Right lobe of liver (tissue), 6 donors: ENCODE measurements at regions of chr5 and their contacts with region 1.

Region 1: DNA sequence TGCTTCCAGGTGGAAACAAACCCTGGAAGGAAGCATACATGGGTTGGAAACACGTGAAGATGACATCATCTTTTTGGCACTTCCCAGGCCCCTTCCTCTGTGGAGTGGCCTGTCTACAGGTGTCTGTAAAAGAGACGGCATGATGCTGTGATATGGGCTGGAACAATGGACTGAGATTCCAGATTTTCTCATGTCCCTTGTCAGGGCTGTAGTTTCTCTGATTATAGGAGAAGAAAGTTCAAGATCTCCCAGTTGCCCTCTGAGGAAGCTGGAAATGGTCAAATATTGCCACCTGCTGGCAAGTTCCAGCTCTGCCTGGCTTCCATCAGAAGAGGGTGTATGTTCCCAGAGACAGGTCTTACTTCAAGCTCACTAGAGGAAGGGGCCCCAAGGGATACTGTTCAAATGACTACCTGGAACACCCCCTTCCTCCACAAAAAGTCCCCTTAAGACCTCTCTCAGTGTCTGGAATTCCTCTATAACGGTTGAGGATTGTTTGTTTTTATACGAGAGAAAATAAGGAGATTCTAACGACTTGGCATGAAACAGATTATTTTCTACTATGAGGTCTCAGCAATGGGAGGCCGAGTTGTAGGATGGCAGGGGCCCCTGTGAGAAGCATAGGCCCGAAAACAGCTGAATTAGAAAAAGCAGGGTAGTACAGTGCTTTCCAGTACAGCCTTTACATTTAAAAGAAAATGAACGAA is 7.3 kb upstream of the ANXA6 start:
- DNase-seq: peak in 2 of 3 donors; percentile 57 to 80
- ATAC-seq: peak; percentile 93 to 98 (median 98)
- H3K4me3 ChIP-seq: no peak overlapping the region
- H3K27ac ChIP-seq: no peak overlapping the region
- H3K4me1 ChIP-seq: peaks cover 0 to 5% (median 0%) of the 10 kb centered on the region in 4 donors
- H3K27me3 ChIP-seq: no peaks in the 10 kb centered on the region
- CTCF ChIP-seq: peak; percentile 92 to 96 (median 93)
- POLR2A ChIP-seq: no peak

Region 2: DNA sequence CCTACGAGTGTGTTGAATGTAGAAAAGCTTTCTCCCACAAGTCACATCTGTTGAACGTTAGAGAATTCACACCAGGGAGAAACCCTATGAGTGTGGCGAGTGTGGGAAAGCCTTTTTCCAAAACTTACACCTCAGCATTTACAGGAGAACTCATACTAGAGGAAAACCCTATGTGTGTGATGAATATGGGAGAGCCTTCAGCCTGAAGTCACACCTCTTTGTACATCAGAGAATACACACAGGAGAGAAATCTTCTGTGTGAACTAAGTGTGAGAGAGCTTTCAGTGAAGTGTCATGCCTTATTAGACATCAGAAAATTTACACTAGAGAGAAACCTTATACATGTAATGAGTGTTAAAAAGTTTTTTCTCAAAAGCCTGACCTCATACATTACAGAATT is 186.2 kb before region 1 on chr5:
- intact Hi-C with region 1: no loop called
- DNase-seq: no peak
- ATAC-seq: no peak
- H3K4me3 ChIP-seq: no peak overlapping the region
- H3K27ac ChIP-seq: no peak overlapping the region
- H3K4me1 ChIP-seq: no peaks in the 10 kb centered on the region
- H3K27me3 ChIP-seq: no peaks in the 10 kb centered on the region
- CTCF ChIP-seq: no peak
- POLR2A ChIP-seq: no peak

Region 3: GRCh38 chr5:151051066-151051930 is 113.5 kb before region 1 on chr5:
- intact Hi-C with region 1: loop called in 1 of 2 experiments (anchors 5 kb)
- DNase-seq: peak; percentile 73 to 80 (median 78)
- ATAC-seq: peak; percentile 83 to 88 (median 84)
- H3K4me3 ChIP-seq: no peak overlapping the region
- H3K27ac ChIP-seq: no peak overlapping the region
- H3K4me1 ChIP-seq: no peaks in the 10 kb centered on the region
- H3K27me3 ChIP-seq: no peaks in the 10 kb centered on the region
- CTCF ChIP-seq: peak; percentile 81 to 87 (median 84)
- POLR2A ChIP-seq: no peak

Region 4: GRCh38 chr5:151115274-151115905 is 49.4 kb before region 1 on chr5:
- intact Hi-C with region 1: loop called (anchors 5 to 10 kb)
- DNase-seq: peak; percentile 76 to 84 (median 81)
- ATAC-seq: peak; percentile 90 to 96 (median 93)
- H3K4me3 ChIP-seq: no peak overlapping the region
- H3K27ac ChIP-seq: no peak overlapping the region
- H3K4me1 ChIP-seq: peaks cover 0 to 3% (median 0%) of the 10 kb centered on the region in 4 donors
- H3K27me3 ChIP-seq: no peaks in the 10 kb centered on the region
- CTCF ChIP-seq: peak; percentile 86 to 94 (median 94)
- POLR2A ChIP-seq: no peak

Region 5: DNA sequence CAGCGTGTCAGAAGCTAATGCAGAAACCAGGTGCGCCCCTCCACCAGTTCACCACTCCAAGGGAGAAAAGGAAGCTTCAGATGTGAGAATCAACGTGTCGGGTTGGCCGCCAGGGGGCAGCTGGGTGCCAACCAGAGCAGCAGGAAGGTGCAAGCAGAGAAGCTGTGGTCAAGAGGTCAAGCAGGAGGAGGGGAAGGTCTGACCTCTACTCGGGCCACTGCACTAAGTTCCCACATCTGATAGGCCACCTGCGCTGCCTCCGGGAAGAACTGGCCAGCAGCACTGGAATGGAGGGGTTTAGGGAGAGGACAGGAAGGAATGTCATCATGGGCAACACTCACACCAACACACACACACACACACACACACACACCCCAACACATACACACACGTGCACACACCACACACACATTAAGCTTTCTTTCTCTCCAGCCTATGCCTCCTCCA is 38.6 kb before region 1 on chr5:
- intact Hi-C with region 1: loop called (anchors 5 kb)
- DNase-seq: peak; percentile 81 to 85 (median 83)
- ATAC-seq: peak; percentile 86 to 93 (median 88)
- H3K4me3 ChIP-seq: no peak overlapping the region
- H3K27ac ChIP-seq: no peak overlapping the region
- H3K4me1 ChIP-seq: peaks cover 0 to 8% (median 0%) of the 10 kb centered on the region in 4 donors
- H3K27me3 ChIP-seq: no peaks in the 10 kb centered on the region
- CTCF ChIP-seq: peak; percentile 81 to 89 (median 84)
- POLR2A ChIP-seq: no peak

Region 6: DNA sequence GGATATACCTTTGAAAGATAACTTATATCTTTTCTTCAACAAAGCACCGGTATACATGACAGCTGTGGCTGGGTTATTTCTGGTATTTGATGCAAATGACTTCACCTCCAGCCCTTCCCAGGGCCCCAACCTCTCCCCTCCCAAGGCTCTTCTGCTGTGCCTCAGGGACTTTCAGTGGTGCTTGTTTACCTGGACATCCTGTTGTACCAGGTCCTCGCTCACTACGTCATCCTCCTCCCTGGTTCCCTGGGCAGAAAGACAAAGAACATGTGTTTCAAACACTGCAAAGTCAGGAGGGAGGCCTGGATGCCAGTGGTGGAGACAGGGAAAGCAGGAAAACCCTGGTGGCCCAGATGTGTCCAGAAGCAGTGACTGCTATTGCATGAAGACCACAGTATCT is 30.6 kb before region 1 on chr5:
- intact Hi-C with region 1: loop called in 1 of 2 experiments (anchors 5 kb)
- DNase-seq: no peak
- ATAC-seq: no peak
- H3K4me3 ChIP-seq: no peak overlapping the region
- H3K27ac ChIP-seq: no peak overlapping the region
- H3K4me1 ChIP-seq: no peaks in the 10 kb centered on the region
- H3K27me3 ChIP-seq: no peaks in the 10 kb centered on the region
- CTCF ChIP-seq: no peak
- POLR2A ChIP-seq: no peak

Region 7: DNA sequence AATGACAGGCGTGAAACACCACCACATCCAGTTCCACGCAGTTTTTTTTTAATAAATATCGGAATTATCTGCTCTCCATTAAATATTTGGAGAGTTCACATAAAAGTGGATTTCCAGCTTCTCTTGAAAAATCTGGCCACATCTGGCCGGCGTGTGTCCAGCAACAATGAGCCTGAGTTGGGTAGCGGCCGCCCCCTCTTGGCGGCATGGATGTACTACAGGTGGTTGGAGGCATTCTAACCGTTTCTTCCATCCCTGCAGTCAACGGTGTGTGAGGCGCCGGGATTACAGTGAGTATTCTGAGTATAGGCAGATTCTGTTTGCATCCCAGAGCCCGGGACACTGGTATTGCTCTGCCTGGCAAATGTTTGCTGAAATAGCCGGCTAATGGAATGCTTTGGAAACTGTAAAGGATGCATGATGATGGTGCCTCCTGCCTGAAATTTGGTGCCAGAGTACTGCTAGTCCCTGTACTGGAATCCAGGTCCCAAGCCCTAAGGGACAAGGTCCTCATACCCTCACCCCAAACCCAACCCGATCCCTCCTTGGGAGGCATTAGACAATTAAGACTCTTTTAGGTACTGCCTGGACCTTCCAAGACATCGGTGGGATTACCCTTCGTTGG is 74.5 kb after region 1 on chr5:
- intact Hi-C with region 1: loop called in 1 of 2 experiments (anchors 10 kb)
- DNase-seq: peak; percentile 73 to 81 (median 79)
- ATAC-seq: peak; percentile 71 to 91 (median 86)
- H3K4me3 ChIP-seq: no peak overlapping the region
- H3K27ac ChIP-seq: no peak overlapping the region
- H3K4me1 ChIP-seq: peaks cover 0 to 9% (median 3%) of the 10 kb centered on the region in 4 donors
- H3K27me3 ChIP-seq: no peaks in the 10 kb centered on the region
- CTCF ChIP-seq: peak; percentile 72 to 94 (median 88)
- POLR2A ChIP-seq: no peak

Region 8: DNA sequence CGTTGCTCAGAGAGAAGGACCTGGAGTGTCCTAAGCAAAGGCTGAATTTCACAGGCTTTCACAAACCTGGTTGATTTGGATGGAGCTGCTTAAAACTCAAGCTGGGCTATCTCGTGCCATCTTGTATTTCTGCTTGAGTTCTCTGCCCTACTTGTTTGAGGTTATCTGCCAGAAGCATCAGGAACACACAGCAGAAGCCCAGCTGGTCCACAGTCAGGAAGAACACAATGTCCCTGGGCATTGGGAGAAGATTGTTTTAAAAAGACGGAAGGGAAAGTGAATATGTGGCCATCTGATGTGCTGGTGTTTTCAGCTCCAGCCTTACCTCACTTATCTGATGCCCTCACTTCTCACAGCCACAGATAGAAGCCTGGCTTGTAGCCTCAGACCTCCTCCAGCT is 249.7 kb after region 1 on chr5:
- intact Hi-C with region 1: no loop called
- DNase-seq: no peak
- ATAC-seq: no peak
- H3K4me3 ChIP-seq: no peak overlapping the region
- H3K27ac ChIP-seq: no peak overlapping the region
- H3K4me1 ChIP-seq: no peaks in the 10 kb centered on the region
- H3K27me3 ChIP-seq: no peaks in the 10 kb centered on the region
- CTCF ChIP-seq: no peak
- POLR2A ChIP-seq: no peak